Activated naive CD8-positive, alpha-beta T cell treated with anti-CD3 and anti-CD28 coated beads, Interleukin-2, amount 10 ng/mL, durations not matched to agents 7 days and 5 days (primary cell): ENCODE measurements at regions of chr17 and their contacts with region 1.

Region 1: DNA sequence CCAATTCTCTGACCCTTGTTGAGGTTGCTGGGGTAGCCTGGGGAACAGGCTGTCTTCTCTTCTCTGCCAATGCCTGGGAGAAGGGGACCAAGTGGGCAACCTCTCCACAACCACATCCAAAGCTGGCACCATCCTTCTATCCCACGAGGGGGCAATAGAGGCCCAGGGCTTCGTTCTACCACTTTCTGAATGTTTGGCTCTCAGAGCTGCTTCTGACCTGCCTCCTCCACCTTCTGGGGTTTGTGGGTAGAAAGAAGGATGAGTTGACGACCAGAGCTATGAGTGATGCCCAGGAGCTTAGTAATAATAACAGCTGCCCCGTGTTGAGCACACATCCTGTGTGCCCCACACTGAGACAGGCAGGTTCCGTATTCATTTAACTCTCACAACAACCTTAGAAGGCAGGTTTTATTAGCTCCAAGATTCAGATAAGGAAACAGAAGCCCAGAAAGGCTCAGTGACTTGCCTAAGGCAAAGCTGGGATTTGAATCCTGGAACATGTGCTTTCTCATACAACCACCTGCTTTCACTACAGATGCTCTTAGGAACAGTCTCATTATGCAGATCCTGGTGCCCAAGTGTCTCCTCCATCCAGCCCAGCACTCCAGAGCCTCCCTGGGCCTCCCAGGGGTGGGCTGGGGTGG is 11.1 kb downstream of the TSPOAP1 start:
- DNase-seq: peak; percentile 56
- ATAC-seq: peak; percentile 91
- H3K4me3 Mint-ChIP-seq: peak overlapping the region; percentile 37
- H3K27ac Mint-ChIP-seq: peak overlapping the region; percentile 76
- H3K4me1 Mint-ChIP-seq: peaks cover 12% of the 10 kb centered on the region
- H3K27me3 Mint-ChIP-seq: peaks cover 1% of the 10 kb centered on the region

Region 2: DNA sequence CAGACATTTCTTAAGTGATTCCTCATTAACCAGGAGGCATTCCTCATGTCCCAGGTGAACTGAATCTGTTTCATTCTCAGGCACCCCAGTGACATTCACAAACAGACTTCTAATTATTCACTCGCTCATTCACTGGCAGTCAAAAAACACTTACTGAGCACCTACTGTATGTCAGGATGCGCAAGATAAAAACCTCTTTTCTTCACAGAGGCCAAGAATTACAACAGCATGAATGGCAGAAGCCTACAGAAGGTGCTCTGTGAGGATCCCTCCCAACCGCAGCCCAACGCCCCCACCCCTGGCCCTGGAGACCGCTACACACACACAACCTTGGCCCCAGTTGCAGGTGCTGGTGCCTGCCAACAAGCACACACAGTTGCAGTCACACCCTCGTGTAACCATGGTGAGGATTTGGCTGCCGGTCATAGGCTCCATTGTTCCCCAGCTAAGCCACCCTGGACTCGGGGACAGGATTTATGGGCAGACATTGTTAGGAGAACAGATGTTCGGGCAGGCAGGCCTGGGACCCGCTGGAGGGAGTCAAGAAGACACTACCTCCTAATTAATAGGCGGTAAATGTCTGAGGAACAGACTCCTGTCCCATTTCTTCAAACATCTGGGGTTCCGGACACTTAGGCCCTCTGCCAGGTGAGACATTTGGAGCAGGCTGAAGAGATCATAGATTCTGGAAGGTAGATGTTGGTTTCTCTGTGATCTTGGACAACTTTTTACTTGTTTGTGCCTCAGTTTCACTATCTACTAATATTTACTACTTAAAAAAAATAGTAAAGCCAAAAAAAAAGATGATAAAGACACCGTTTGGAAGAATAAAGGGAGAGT is 405.5 kb before region 1 on chr17:
- POLR2A ChIA-PET with region 1: no interaction called
- DNase-seq: no peak
- ATAC-seq: no peak
- H3K4me3 Mint-ChIP-seq: no peak overlapping the region
- H3K27ac Mint-ChIP-seq: no peak overlapping the region
- H3K4me1 Mint-ChIP-seq: peaks cover 1% of the 10 kb centered on the region
- H3K27me3 Mint-ChIP-seq: peaks cover 16% of the 10 kb centered on the region

Region 3: DNA sequence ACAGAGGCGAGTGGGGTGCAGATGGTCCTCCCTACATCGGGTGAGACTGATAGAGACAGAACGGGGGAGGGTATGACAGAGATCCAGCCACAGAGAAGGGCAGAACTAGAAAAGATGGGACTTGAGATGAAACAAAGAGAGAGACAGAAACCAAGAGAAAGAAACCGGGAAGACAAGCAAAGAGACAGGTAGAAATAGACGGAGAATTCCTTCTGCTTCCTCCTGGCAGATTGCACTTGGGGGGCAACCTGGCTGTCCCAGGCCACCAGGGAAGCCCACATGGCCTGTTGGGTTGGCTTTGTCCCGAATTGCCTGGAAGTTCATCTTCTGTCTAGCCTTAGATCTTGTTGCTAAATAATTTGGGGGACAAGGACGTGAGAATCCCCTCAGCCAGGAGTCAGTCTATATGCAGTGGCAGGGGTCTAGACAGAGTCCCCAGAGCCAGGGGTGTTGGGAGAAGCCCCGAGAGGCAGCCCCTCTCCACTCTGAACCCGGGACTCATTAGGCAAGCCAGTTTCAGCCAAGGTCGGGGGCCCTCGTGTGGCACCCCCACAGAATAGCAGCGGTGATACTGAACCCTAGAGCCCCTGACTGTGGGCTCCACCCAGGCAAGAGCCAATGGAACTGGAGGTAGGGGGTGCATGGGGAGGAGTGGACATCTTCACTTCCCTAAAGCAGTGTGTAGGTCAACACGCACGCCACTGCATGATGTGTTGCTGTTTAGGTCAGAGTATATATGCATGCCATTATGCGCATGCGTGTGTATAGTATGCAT is 11.7 kb after region 1 on chr17:
- POLR2A ChIA-PET with region 1: interaction called, 2,283 read pairs
- DNase-seq: peak; percentile 80
- ATAC-seq: peak; percentile 11
- H3K4me3 Mint-ChIP-seq: peak overlapping the region; percentile 93
- H3K27ac Mint-ChIP-seq: peak overlapping the region; percentile 97
- H3K4me1 Mint-ChIP-seq: peaks cover 49% of the 10 kb centered on the region
- H3K27me3 Mint-ChIP-seq: no peaks in the 10 kb centered on the region

Region 4: DNA sequence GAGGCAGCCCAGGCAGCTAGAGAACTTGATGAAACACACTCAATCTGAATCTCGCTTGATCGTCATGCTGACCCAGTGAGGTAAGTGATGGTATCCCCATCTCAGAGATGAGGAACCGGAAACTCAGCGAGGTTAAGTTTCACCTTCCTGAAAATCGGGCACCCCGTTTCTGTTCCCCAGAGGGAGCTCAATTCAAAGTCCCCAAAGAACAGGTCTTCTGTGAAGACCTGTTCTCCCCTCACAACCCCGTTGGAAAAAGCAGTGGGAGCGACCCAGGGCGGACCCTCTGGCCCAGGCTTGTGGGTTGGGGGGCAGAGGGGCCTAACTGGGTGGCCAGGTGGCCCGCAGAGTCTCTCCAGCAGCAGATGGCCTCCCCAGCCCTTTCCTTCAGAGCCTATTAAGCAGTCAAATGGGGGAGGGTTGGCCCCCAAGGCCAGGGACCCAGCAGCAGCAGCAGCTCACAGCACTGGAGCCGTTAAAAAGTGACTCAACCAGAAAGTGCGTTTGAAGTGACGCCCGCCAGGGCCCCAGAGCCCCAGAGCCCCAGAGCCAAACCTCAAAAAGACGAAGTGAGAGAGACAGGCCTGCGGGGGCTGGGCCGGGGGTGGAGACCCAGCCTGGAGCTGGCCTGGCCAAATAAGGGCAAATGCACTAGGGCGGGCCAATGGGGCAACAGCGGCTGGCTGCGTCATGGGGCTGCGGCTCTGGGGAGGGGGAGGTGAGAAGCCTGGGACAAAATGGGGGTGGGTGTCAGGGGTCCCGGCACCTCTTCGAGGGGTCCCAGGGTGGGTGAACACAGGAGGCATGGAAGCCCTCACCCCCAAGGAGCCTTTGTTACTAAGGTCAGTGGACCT is 20.3 kb after region 1 on chr17:
- POLR2A ChIA-PET with region 1: interaction called, 2,283 read pairs
- DNase-seq: peak; percentile 92
- ATAC-seq: peak; percentile 62
- H3K4me3 Mint-ChIP-seq: peak overlapping the region; percentile 93
- H3K27ac Mint-ChIP-seq: peak overlapping the region; percentile 97
- H3K4me1 Mint-ChIP-seq: peaks cover 37% of the 10 kb centered on the region
- H3K27me3 Mint-ChIP-seq: no peaks in the 10 kb centered on the region